Naive thymus-derived CD4-positive, alpha-beta T cell (primary cell): ENCODE measurements at regions of chr14 and their contacts with region 1.

Region 1: GRCh38 chr14:93975791-93976476 is 436 bp downstream of the ASB2 start:
- DNase-seq: no peak
- ATAC-seq: no peak
- H3K4me3 ChIP-seq: peak overlapping the region; percentile 9
- H3K4me3 Mint-ChIP-seq: peak overlapping the region in 9 of 10 donors; percentile 18 to 92 (median 59)
- H3K27ac ChIP-seq: no peak overlapping the region
- H3K27ac Mint-ChIP-seq: peak overlapping the region in 3 of 9 donors; percentile 12 to 97 (median 28)
- H3K4me1 ChIP-seq: peaks cover 41 to 46% of the 10 kb centered on the region in 2 donors
- H3K4me1 Mint-ChIP-seq: peaks cover 39 to 94% (median 62%) of the 10 kb centered on the region in 7 donors
- H3K27me3 ChIP-seq: no peaks in the 10 kb centered on the region
- H3K27me3 Mint-ChIP-seq: peaks cover 0 to 6% (median 6%) of the 10 kb centered on the region in 5 donors

Region 2: GRCh38 chr14:92471919-92472318 is 1504.0 kb before region 1 on chr14:
- CTCF ChIA-PET with region 1: no interaction called
- POLR2A ChIA-PET with region 1: no interaction called
- intact Hi-C with region 1: no loop called
- DNase-seq: no peak
- ATAC-seq: no peak
- H3K4me3 ChIP-seq: no peak overlapping the region
- H3K4me3 Mint-ChIP-seq: no peak overlapping the region
- H3K27ac ChIP-seq: no peak overlapping the region
- H3K27ac Mint-ChIP-seq: no peak overlapping the region
- H3K4me1 ChIP-seq: no peaks in the 10 kb centered on the region
- H3K4me1 Mint-ChIP-seq: peaks cover 2 to 14% (median 11%) of the 10 kb centered on the region in 7 donors
- H3K27me3 ChIP-seq: no peaks in the 10 kb centered on the region
- H3K27me3 Mint-ChIP-seq: peaks cover 0 to 14% (median 0%) of the 10 kb centered on the region in 5 donors

Region 3: GRCh38 chr14:93195316-93195999 is 780.5 kb before region 1 on chr14:
- CTCF ChIA-PET with region 1: no interaction called
- POLR2A ChIA-PET with region 1: no interaction called
- intact Hi-C with region 1: no loop called
- DNase-seq: no peak
- ATAC-seq: no peak
- H3K4me3 ChIP-seq: no peak overlapping the region
- H3K4me3 Mint-ChIP-seq: no peak overlapping the region
- H3K27ac ChIP-seq: no peak overlapping the region
- H3K27ac Mint-ChIP-seq: peak overlapping the region in 1 of 9 donors; percentile 14
- H3K4me1 ChIP-seq: no peaks in the 10 kb centered on the region
- H3K4me1 Mint-ChIP-seq: peaks cover 0 to 8% (median 3%) of the 10 kb centered on the region in 7 donors
- H3K27me3 ChIP-seq: no peaks in the 10 kb centered on the region
- H3K27me3 Mint-ChIP-seq: no peaks in the 10 kb centered on the region

Region 4: DNA sequence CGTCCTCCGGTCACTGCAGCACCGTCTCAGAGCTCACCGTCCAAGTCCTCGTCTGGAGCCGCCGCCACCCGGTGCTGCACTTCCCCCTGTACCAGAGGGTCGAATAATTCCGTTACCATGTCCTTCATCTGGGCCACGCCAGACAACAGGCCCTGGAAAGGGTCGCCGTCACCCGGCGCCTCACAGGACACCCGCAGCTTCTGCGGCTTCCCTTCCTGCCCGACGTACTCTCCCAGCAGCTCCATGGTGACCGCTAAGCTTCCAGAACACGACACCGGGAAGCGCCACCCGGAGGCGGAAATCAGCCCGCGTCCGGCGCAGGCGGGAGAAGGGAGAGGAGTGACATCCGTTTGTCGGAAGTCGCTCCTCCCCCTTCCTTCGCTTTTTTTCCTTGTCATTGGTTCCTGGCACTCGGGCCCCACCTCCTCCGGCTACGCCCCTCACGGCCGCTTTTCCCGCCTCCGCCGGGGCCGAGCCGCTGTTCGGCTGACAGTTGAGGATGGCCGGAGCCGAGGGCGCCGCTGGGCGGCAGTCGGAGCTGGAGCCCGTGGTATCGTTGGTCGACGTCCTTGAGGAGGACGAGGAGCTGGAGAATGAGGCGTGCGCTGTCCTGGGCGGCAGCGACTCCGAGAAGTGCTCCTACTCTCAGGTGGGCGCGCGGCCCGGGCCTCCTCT is 769.0 kb before region 1 on chr14 and contains the starts of genes GON7 and UBR7:
- CTCF ChIA-PET with region 1: no interaction called
- POLR2A ChIA-PET with region 1: no interaction called
- intact Hi-C with region 1: no loop called
- DNase-seq: peak; percentile 66 to 91 (median 83)
- ATAC-seq: peak; percentile 99
- H3K4me3 ChIP-seq: peak within 1 kb of the TSS; percentile 81
- H3K4me3 Mint-ChIP-seq: peak within 1 kb of the TSS; percentile 75 to 99 (median 94)
- H3K27ac ChIP-seq: peak within 1 kb of the TSS; percentile 87
- H3K27ac Mint-ChIP-seq: peak within 1 kb of the TSS; percentile 88 to 97 (median 93)
- H3K4me1 ChIP-seq: peaks cover 13 to 22% of the 10 kb centered on the region in 2 donors
- H3K4me1 Mint-ChIP-seq: peaks cover 22 to 65% (median 50%) of the 10 kb centered on the region in 7 donors
- H3K27me3 ChIP-seq: no peaks in the 10 kb centered on the region
- H3K27me3 Mint-ChIP-seq: no peaks in the 10 kb centered on the region
- total RNA-seq, gene GON7: 3.5 to 17.4 (median 8.3) TPM
- total RNA-seq, gene UBR7: 10.1 to 31.3 (median 13.5) TPM

Region 5: GRCh38 chr14:93991212-93991611 is 15.3 kb after region 1 on chr14:
- CTCF ChIA-PET with region 1: interaction called, 3 read pairs
- POLR2A ChIA-PET with region 1: interaction called, 4 read pairs
- intact Hi-C with region 1: loop called in 1 of 2 experiments (anchors 2 kb)
- DNase-seq: no peak
- ATAC-seq: no peak
- H3K4me3 ChIP-seq: no peak overlapping the region
- H3K4me3 Mint-ChIP-seq: no peak overlapping the region
- H3K27ac ChIP-seq: no peak overlapping the region
- H3K27ac Mint-ChIP-seq: no peak overlapping the region
- H3K4me1 ChIP-seq: no peaks in the 10 kb centered on the region
- H3K4me1 Mint-ChIP-seq: peaks cover 0 to 33% (median 2%) of the 10 kb centered on the region in 7 donors
- H3K27me3 ChIP-seq: no peaks in the 10 kb centered on the region
- H3K27me3 Mint-ChIP-seq: no peaks in the 10 kb centered on the region

Region 6: DNA sequence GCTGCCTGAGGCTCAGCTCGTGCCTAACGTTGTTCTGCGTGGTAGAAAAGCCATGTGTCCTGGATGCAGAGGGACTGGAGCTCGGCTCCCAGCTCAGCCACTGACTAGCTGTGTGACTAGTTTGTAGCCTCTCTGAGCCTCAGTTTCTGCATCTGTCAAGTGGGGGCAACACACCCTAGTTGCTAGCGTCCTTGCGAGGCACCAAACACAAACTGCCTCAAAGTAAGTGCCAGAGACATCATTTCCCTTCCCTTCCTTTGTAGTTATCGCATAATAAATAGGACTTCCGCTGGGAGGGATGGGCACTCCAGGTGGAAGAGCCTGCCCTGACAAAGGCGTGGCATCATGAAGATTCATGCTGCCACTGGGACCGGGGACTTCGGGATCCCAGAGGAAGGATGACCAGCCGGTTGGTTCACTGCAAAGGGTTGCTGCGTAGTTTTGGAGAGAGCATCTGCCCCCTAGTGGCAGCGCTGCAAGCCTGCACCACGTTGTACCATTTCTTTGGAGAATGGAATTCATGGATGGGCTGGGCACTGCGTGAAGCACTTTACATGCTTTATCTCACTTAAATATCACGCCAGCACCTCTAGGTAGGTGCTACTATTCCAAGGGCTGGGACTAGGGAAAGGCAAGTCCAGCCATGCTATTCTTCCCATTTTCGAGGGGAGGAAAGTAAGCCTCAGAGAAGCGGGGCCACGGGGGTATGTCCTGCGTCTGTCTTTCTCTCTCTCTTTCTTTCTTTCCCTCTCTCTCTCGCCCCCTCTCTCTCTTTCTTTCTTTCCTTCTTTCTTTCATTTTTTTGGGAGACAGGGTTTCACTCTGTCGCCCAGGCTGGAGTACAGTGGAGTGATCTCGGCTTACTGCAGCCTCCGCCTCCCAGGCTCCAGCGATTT is 25.8 kb after region 1 on chr14:
- CTCF ChIA-PET with region 1: interaction called, 14 read pairs
- POLR2A ChIA-PET with region 1: interaction called, 3 read pairs
- intact Hi-C with region 1: loop called (anchors 1 to 2 kb)
- DNase-seq: peak; percentile 28 to 63 (median 51)
- ATAC-seq: peak; percentile 85
- H3K4me3 ChIP-seq: no peak overlapping the region
- H3K4me3 Mint-ChIP-seq: peak overlapping the region in 9 of 10 donors; percentile 23 to 57 (median 53)
- H3K27ac ChIP-seq: no peak overlapping the region
- H3K27ac Mint-ChIP-seq: peak overlapping the region in 2 of 9 donors; percentile 38 to 78
- H3K4me1 ChIP-seq: peaks cover 4 to 6% of the 10 kb centered on the region in 2 donors
- H3K4me1 Mint-ChIP-seq: peaks cover 2 to 45% (median 10%) of the 10 kb centered on the region in 7 donors
- H3K27me3 ChIP-seq: no peaks in the 10 kb centered on the region
- H3K27me3 Mint-ChIP-seq: peaks cover 6 to 19% (median 8%) of the 10 kb centered on the region in 5 donors

Region 7: GRCh38 chr14:94026173-94026888 is 50.4 kb after region 1 on chr14 and contains the start of gene OTUB2:
- CTCF ChIA-PET with region 1: interaction called, 3 read pairs
- POLR2A ChIA-PET with region 1: interaction called, 3 read pairs
- intact Hi-C with region 1: loop called (anchors 1 kb)
- DNase-seq: peak; percentile 89 to 98 (median 96)
- ATAC-seq: peak; percentile 100
- H3K4me3 ChIP-seq: peak within 1 kb of the TSS; percentile 51
- H3K4me3 Mint-ChIP-seq: peak within 1 kb of the TSS; percentile 72 to 90 (median 82)
- H3K27ac ChIP-seq: no peak within 1 kb of the TSS
- H3K27ac Mint-ChIP-seq: peak within 1 kb of the TSS in 7 of 9 donors; percentile 20 to 75 (median 66)
- H3K4me1 ChIP-seq: peaks cover 5 to 12% of the 10 kb centered on the region in 2 donors
- H3K4me1 Mint-ChIP-seq: peaks cover 14 to 43% (median 18%) of the 10 kb centered on the region in 7 donors
- H3K27me3 ChIP-seq: no peaks in the 10 kb centered on the region
- H3K27me3 Mint-ChIP-seq: peaks cover 0 to 2% (median 0%) of the 10 kb centered on the region in 5 donors
- total RNA-seq, gene OTUB2: 0.11 to 2.5 (median 0.63) TPM in 4 of 5 experiments, not detected in the other